ENCODE measurements at regions of chr10 and their contacts with region 1.

Region 1: DNA sequence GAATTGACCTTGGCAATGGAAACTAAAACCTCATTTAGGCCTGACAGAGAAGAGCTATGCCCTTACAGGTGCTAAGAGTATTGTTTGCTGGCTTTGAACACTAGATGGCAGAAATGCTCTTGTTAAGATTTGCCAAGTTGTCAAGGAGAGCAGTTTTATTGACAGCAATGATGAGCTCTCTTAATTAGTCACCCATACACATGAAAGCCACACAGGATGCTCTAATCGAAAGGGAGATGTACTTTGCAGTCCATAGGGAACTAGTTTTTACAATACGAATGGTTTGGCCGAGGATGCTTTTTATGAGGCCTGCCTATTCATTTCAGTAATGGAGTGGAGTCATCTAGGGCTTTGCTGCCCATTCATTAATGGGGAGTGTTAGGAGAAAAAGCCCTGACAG is 45.4 kb upstream of the MBL2 start:
- DNase-seq: peak; percentile 59
- ATAC-seq: peak; percentile 73
- H3K4me3 ChIP-seq: no peak overlapping the region
- H3K27ac ChIP-seq: no peak overlapping the region
- H3K4me1 ChIP-seq: no peaks in the 10 kb centered on the region
- H3K27me3 ChIP-seq: no peaks in the 10 kb centered on the region
- CTCF ChIP-seq: peak; percentile 54
- POLR2A ChIP-seq: no peak
- RAD21 ChIP-seq: peak; percentile 67

Region 2: GRCh38 chr10:52368741-52369140 is 449.3 kb before region 1 on chr10:
- CTCF ChIA-PET with region 1: no interaction called
- POLR2A ChIA-PET with region 1: no interaction called
- dilution Hi-C with region 1: no loop called
- in situ Hi-C with region 1: no loop called
- intact Hi-C with region 1: no loop called
- DNase-seq: no peak
- ATAC-seq: no peak
- H3K4me3 ChIP-seq: no peak overlapping the region
- H3K27ac ChIP-seq: no peak overlapping the region
- H3K4me1 ChIP-seq: no peaks in the 10 kb centered on the region
- H3K27me3 ChIP-seq: no peaks in the 10 kb centered on the region
- CTCF ChIP-seq: no peak
- POLR2A ChIP-seq: no peak
- RAD21 ChIP-seq: no peak

Region 3: DNA sequence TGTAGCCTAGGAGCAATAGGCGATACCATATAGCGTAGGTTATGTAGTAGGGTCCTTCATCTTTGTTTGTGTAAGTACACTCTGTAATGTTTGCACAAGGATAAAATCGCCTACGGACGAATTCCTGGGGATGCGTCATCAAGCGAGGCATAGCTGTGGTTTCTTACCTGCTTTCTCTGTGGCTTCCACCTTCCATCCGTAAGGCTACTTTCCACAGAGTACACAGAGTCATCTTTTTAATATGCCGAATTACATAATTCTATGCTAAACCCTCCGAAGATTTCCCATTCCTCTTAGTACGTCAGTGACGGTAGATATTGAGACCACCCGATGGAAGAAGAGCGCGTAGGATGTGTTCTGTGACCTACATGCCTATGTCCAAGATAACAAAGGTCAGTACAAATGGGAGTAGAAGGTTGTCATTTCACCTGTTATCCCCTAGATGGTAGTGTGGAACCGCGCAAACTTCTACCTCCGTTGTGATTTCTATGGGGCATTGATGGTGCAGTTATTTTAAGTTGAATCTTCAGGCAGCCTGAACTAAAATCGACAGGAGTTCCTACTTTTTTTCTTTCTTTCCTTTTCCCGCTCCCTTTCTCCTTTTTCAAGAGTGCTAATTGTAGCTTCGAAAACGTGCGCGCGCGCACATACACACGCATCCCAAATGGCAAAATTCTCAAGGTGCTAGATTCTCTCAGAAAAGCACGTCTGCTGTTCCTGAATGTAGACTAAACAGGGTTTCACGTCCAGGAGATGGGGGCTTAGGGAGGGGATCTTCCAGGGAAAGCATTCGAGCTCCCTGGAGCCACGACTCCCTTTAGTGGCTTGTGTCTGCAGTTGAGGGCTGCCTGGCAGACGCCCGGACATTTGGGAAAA is 66.2 kb after region 1 on chr10:
- CTCF ChIA-PET with region 1: interaction called, 3 read pairs
- POLR2A ChIA-PET with region 1: no interaction called
- dilution Hi-C with region 1: no loop called
- in situ Hi-C with region 1: no loop called
- intact Hi-C with region 1: loop called (anchors 1 kb)
- DNase-seq: peak; percentile 67
- ATAC-seq: peak; percentile 100
- H3K4me3 ChIP-seq: no peak overlapping the region
- H3K27ac ChIP-seq: no peak overlapping the region
- H3K4me1 ChIP-seq: no peaks in the 10 kb centered on the region
- H3K27me3 ChIP-seq: peaks cover 5% of the 10 kb centered on the region; the same call in 1 of the 2 replicates
- CTCF ChIP-seq: peak; percentile 79
- POLR2A ChIP-seq: no peak
- RAD21 ChIP-seq: peak; percentile 85

Region 4: DNA sequence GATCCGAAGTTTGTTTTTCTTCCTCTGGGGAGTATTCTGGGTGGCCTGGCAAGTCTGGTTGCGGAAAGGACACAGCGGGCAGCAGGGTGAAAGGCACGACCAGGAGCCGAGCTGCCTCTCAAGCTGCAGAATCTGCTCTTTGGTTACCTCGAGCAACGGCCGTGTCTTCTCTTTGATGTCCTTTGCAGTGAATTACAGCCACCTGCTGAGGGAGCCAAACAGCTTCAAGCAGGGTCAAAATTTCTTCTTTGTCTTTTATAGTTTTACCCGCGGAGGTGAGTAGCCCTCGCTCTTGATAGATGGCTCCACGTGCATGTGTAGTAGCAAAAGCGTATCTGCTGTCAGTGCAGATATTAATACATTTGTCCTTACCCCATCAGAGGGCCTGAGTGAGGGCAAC is 131.9 kb after region 1 on chr10:
- CTCF ChIA-PET with region 1: interaction called, 9 read pairs
- POLR2A ChIA-PET with region 1: no interaction called
- dilution Hi-C with region 1: no loop called
- in situ Hi-C with region 1: no loop called
- intact Hi-C with region 1: loop called (anchors 10 kb)
- DNase-seq: no peak
- ATAC-seq: no peak
- H3K4me3 ChIP-seq: no peak overlapping the region
- H3K27ac ChIP-seq: no peak overlapping the region
- H3K4me1 ChIP-seq: no peaks in the 10 kb centered on the region
- H3K27me3 ChIP-seq: peaks cover 2% of the 10 kb centered on the region
- CTCF ChIP-seq: no peak
- POLR2A ChIP-seq: no peak
- RAD21 ChIP-seq: no peak

Measured in IMR-90 (cell line).